ENCODE measurements at regions of chr20 and their contacts with region 1.

Region 1: DNA sequence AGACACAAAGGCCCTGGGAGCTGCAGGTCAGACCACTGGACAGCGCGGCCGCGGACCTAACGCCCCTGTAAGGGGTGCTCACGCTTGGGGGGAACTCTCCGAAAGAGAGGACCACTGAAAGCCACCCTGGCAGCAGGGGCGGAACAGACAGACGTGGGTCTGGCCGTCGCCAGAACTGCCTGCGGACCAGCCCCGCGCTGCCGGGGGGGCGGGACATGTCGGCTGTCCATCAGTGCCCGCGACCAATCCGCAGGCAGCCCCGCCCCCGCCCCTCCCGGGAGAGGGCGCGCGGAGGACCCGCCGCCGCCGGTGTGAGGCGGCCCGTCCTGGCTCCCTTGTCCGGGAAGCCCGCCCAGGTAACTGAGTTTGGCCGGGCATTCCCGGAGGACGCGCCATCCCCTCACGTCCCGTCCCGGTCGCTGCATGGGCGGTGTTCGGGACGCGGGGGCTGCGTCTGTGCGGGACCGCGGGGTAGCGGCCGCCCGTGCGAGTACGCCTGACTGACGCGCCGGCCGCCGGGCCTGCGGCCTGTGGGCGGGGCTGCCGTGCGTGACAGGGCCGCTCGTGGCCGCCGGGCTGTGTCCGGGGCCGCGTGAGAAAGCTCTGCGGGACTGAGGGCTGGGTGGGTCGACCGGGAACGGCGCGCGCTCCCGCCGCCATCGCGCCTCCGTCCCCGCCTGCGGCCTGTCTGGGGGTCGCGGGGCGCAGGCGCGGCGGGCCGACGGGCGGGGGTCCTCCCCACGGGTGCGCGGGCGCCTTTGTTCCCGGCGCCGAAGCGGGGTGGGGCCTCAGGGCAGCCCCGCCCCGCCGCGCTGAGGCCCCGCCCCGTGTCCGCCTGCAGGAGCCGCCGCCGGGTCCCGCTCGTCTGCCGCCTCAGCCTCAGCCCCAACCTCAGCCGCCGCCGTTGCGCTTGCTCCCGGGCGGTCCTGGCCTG is at the start of gene PLCG1:
- DNase-seq: peak; percentile 74 to 89 (median 82)
- ATAC-seq: peak; percentile 84
- H3K4me3 ChIP-seq: peak within 1 kb of the TSS; percentile 82
- H3K4me3 Mint-ChIP-seq: peak within 1 kb of the TSS; percentile 89 to 98 (median 95)
- H3K27ac ChIP-seq: peak within 1 kb of the TSS; percentile 91
- H3K27ac Mint-ChIP-seq: peak within 1 kb of the TSS; percentile 86 to 100 (median 96)
- H3K4me1 ChIP-seq: peaks cover 32 to 40% of the 10 kb centered on the region in 2 donors
- H3K4me1 Mint-ChIP-seq: peaks cover 48 to 66% (median 61%) of the 10 kb centered on the region in 7 donors
- H3K27me3 ChIP-seq: no peaks in the 10 kb centered on the region
- H3K27me3 Mint-ChIP-seq: no peaks in the 10 kb centered on the region
- total RNA-seq, gene PLCG1: 343 to 559 (median 418) TPM

Region 2: GRCh38 chr20:41028348-41029148 is 108.4 kb before region 1 on chr20 and contains the start of gene TOP1:
- CTCF ChIA-PET with region 1: interaction called, 3 read pairs
- POLR2A ChIA-PET with region 1: no interaction called
- intact Hi-C with region 1: loop called (anchors 1 to 2 kb)
- DNase-seq: peak; percentile 98 to 100 (median 99)
- ATAC-seq: peak; percentile 99
- H3K4me3 ChIP-seq: peak within 1 kb of the TSS; percentile 58
- H3K4me3 Mint-ChIP-seq: peak within 1 kb of the TSS; percentile 79 to 96 (median 94)
- H3K27ac ChIP-seq: peak within 1 kb of the TSS; percentile 99
- H3K27ac Mint-ChIP-seq: peak within 1 kb of the TSS; percentile 88 to 97 (median 96)
- H3K4me1 ChIP-seq: peaks cover 32 to 38% of the 10 kb centered on the region in 2 donors
- H3K4me1 Mint-ChIP-seq: peaks cover 41 to 52% (median 48%) of the 10 kb centered on the region in 7 donors
- H3K27me3 ChIP-seq: no peaks in the 10 kb centered on the region
- H3K27me3 Mint-ChIP-seq: no peaks in the 10 kb centered on the region
- total RNA-seq, gene TOP1: 32.0 to 82.8 (median 43.4) TPM

Region 3: GRCh38 chr20:41167481-41168253 is 30.7 kb after region 1 on chr20:
- CTCF ChIA-PET with region 1: interaction called, 21 read pairs
- POLR2A ChIA-PET with region 1: interaction called, 604 read pairs
- intact Hi-C with region 1: no loop called
- DNase-seq: no peak
- ATAC-seq: no peak
- H3K4me3 ChIP-seq: no peak overlapping the region
- H3K4me3 Mint-ChIP-seq: no peak overlapping the region
- H3K27ac ChIP-seq: peak overlapping the region; percentile 57
- H3K27ac Mint-ChIP-seq: peak overlapping the region; percentile 46 to 95 (median 89)
- H3K4me1 ChIP-seq: peaks cover 5 to 14% of the 10 kb centered on the region in 2 donors
- H3K4me1 Mint-ChIP-seq: peaks cover 25 to 52% (median 45%) of the 10 kb centered on the region in 7 donors
- H3K27me3 ChIP-seq: no peaks in the 10 kb centered on the region
- H3K27me3 Mint-ChIP-seq: no peaks in the 10 kb centered on the region

Region 4: GRCh38 chr20:41232973-41233926 is 96.3 kb after region 1 on chr20:
- CTCF ChIA-PET with region 1: interaction called, 122 read pairs
- POLR2A ChIA-PET with region 1: interaction called, 18 read pairs
- intact Hi-C with region 1: loop called (anchors 1 kb)
- DNase-seq: no peak
- ATAC-seq: no peak
- H3K4me3 ChIP-seq: no peak overlapping the region
- H3K4me3 Mint-ChIP-seq: peak overlapping the region in 5 of 10 donors; percentile 9 to 55 (median 15)
- H3K27ac ChIP-seq: no peak overlapping the region
- H3K27ac Mint-ChIP-seq: peak overlapping the region in 2 of 9 donors; percentile 1 to 28
- H3K4me1 ChIP-seq: peaks cover 0 to 7% of the 10 kb centered on the region in 2 donors
- H3K4me1 Mint-ChIP-seq: peaks cover 16 to 31% (median 20%) of the 10 kb centered on the region in 7 donors
- H3K27me3 ChIP-seq: no peaks in the 10 kb centered on the region
- H3K27me3 Mint-ChIP-seq: no peaks in the 10 kb centered on the region

Region 5: GRCh38 chr20:41411391-41411847 is 274.5 kb after region 1 on chr20:
- CTCF ChIA-PET with region 1: interaction called, 4 read pairs
- POLR2A ChIA-PET with region 1: no interaction called
- intact Hi-C with region 1: loop called in 1 of 2 experiments (anchors 10 kb)
- DNase-seq: no peak
- ATAC-seq: peak; percentile 38
- H3K4me3 ChIP-seq: no peak overlapping the region
- H3K4me3 Mint-ChIP-seq: no peak overlapping the region
- H3K27ac ChIP-seq: no peak overlapping the region
- H3K27ac Mint-ChIP-seq: peak overlapping the region in 3 of 9 donors; percentile 19 to 78 (median 43)
- H3K4me1 ChIP-seq: peaks cover 3 to 7% of the 10 kb centered on the region in 2 donors
- H3K4me1 Mint-ChIP-seq: peaks cover 20 to 43% (median 26%) of the 10 kb centered on the region in 7 donors
- H3K27me3 ChIP-seq: no peaks in the 10 kb centered on the region
- H3K27me3 Mint-ChIP-seq: no peaks in the 10 kb centered on the region

Region 6: DNA sequence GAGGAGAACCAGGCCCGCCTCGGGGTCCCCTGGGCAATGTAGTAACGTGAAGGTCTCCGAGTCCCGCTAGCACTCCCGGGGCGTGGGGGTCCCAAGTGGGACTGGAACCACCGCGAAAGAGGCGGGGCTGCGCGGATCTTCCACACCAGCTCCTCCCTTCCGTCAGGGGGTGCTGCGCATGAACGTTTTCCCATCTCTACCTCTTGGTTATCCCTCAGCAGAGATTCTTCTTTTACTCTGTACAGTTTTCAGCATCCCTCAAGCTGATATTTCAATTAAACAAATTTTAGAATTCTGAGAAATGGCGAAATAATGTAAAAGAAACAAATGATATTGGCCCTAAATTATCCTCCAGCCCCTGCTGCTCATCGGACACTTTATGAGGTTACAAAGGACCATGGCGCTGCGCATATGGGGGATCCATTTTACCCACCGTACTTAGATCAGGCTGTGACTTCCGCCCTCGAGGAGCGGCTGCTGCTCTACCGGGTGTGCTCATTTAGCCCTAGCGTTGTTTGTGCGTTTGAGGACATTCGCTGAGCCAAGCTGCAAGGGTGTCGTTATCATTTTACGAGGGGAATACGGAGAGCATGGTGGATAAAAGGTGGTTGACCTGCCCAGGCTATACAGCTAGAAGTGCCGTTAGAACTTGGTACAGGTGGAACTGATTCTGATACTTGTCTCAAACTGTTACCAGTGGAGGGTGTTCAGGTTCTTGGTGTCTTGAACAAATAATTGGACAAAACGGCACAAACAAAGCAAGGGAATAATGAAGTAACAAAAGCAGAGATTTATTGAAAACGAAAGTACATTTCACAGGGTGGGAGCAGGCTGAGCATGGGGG is 556.4 kb after region 1 on chr20:
- CTCF ChIA-PET with region 1: no interaction called
- POLR2A ChIA-PET with region 1: interaction called, 3 read pairs
- intact Hi-C with region 1: loop called (anchors 2 to 5 kb)
- DNase-seq: peak; percentile 59 to 89 (median 83)
- ATAC-seq: peak; percentile 94
- H3K4me3 ChIP-seq: peak overlapping the region; percentile 63
- H3K4me3 Mint-ChIP-seq: peak overlapping the region; percentile 87 to 94 (median 92)
- H3K27ac ChIP-seq: peak overlapping the region; percentile 77
- H3K27ac Mint-ChIP-seq: peak overlapping the region; percentile 91 to 99 (median 96)
- H3K4me1 ChIP-seq: no peaks in the 10 kb centered on the region
- H3K4me1 Mint-ChIP-seq: peaks cover 6 to 24% (median 20%) of the 10 kb centered on the region in 7 donors
- H3K27me3 ChIP-seq: no peaks in the 10 kb centered on the region
- H3K27me3 Mint-ChIP-seq: peaks cover 2 to 6% (median 5%) of the 10 kb centered on the region in 5 donors